ENCODE measurements at regions of chr11 and their contacts with region 1.

Region 1: DNA sequence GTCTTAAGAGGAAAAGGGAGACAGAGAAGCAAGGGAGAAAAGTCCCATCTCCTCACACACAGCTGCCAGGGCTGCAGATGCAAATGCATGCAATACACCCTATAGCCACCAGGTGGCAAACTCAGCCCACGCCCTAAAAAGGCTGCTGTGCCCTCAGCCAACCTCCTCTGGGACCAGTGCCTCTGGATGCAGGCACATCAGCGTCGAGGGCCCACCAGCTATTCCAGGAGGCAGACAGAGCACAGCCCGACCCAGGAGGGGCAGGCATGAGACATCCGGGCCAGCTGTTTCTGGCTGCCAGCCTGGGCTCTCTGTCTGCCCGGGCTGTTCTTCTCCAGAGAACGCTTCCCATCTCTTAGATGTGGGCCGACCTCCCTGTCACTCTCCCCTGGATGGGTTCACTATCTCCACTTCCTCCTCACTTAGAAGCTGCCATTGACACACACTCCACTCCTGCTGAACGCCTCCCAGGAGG is 39.7 kb downstream of the TPBGL start:
- DNase-seq: peak; percentile 79 to 93
- ATAC-seq: peak; percentile 85 to 97
- H3K4me3 ChIP-seq: no peak overlapping the region
- H3K27ac ChIP-seq: peak overlapping the region in 1 of 2 experiments; percentile 28; a peak in 1 of 6 replicates
- H3K4me1 ChIP-seq: peaks cover 10% of the 10 kb centered on the region
- CTCF ChIP-seq: peak; percentile 90
- EP300 ChIP-seq: no peak
- POLR2A ChIP-seq: no peak
- RAD21 ChIP-seq: peak; percentile 96 to 99

Region 2: GRCh38 chr11:75132080-75132479 is 148.2 kb before region 1 on chr11:
- CTCF ChIA-PET with region 1: no interaction called
- POLR2A ChIA-PET with region 1: no interaction called
- DNase-seq: no peak
- ATAC-seq: no peak
- H3K4me3 ChIP-seq: no peak overlapping the region
- H3K27ac ChIP-seq: no peak overlapping the region
- H3K4me1 ChIP-seq: no peaks in the 10 kb centered on the region
- CTCF ChIP-seq: no peak
- EP300 ChIP-seq: no peak
- POLR2A ChIP-seq: no peak
- RAD21 ChIP-seq: no peak

Region 3: DNA sequence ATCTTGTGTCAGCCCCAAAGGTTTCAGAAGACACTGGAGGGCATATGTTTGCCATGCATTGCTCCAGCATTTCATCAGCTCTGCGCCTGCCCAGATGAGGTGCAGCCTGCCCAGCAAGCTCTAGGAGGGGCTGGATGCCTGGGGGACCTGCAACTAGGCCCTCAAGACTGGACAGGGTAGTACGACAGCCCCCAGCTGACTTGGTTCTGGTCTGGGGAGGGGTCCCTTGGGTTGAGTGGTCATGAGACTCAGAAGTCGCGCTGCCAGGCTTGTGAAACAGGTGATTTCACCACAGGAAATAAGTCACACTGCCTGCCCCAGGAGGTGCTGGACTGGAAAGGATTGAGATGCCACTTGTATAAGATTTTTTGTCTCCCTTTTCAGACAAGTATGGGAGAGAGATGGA is 16.3 kb before region 1 on chr11:
- CTCF ChIA-PET with region 1: interaction called, 69 read pairs
- POLR2A ChIA-PET with region 1: no interaction called
- DNase-seq: no peak
- ATAC-seq: no peak; a peak in 1 of 6 replicates
- H3K4me3 ChIP-seq: no peak overlapping the region
- H3K27ac ChIP-seq: peak overlapping the region; percentile 19 to 43; a peak in 1 of 6 replicates
- H3K4me1 ChIP-seq: peaks cover 9% of the 10 kb centered on the region; the same call in 1 of the 3 replicates
- CTCF ChIP-seq: no peak
- EP300 ChIP-seq: no peak
- POLR2A ChIP-seq: no peak
- RAD21 ChIP-seq: no peak

Region 4: DNA sequence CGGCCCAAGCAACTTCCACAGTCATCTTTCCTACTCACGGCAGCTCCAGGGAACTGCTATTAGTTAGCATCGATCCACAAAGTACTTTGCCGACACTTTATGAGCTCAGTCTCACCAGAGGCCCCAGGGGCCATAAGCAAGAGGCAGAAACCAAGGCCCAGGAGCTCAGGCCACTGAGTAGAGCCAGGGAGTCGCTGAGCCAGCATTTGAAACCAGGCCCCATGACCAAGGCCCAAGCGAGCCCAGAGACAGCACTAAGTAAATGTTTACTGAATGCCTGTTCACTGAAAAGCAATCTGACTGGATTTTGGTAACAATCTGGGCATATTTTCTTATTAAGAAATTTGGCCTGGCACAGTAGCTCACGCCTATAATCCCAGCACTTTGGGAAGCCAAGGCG is 27.9 kb after region 1 on chr11:
- CTCF ChIA-PET with region 1: interaction called, 20 read pairs
- POLR2A ChIA-PET with region 1: no interaction called
- DNase-seq: no peak
- ATAC-seq: no peak
- H3K4me3 ChIP-seq: no peak overlapping the region
- H3K27ac ChIP-seq: no peak overlapping the region
- H3K4me1 ChIP-seq: no peaks in the 10 kb centered on the region
- CTCF ChIP-seq: no peak
- EP300 ChIP-seq: no peak
- POLR2A ChIP-seq: no peak
- RAD21 ChIP-seq: no peak

Region 5: GRCh38 chr11:75328426-75329277 is 48.4 kb after region 1 on chr11:
- CTCF ChIA-PET with region 1: interaction called, 79 read pairs
- POLR2A ChIA-PET with region 1: no interaction called
- DNase-seq: peak; percentile 85 to 86
- ATAC-seq: peak; percentile 94 to 95
- H3K4me3 ChIP-seq: no peak overlapping the region
- H3K27ac ChIP-seq: peak overlapping the region; percentile 17 to 57; a peak in 5 of 6 replicates
- H3K4me1 ChIP-seq: peaks cover 62% of the 10 kb centered on the region
- CTCF ChIP-seq: peak; percentile 85
- EP300 ChIP-seq: no peak
- POLR2A ChIP-seq: no peak
- RAD21 ChIP-seq: peak; percentile 96 to 98

Region 6: GRCh38 chr11:75342903-75343870 is 62.9 kb after region 1 on chr11:
- CTCF ChIA-PET with region 1: interaction called, 21 read pairs
- POLR2A ChIA-PET with region 1: interaction called, 4 read pairs
- DNase-seq: peak; percentile 76 to 94
- ATAC-seq: peak; percentile 44 to 56; a peak in 5 of 6 replicates
- H3K4me3 ChIP-seq: no peak overlapping the region
- H3K27ac ChIP-seq: peak overlapping the region; percentile 76 to 80
- H3K4me1 ChIP-seq: peaks cover 81% of the 10 kb centered on the region
- CTCF ChIP-seq: no peak
- EP300 ChIP-seq: no peak
- POLR2A ChIP-seq: no peak
- RAD21 ChIP-seq: no peak

Region 7: GRCh38 chr11:75454987-75455386 is 174.7 kb after region 1 on chr11:
- CTCF ChIA-PET with region 1: no interaction called
- POLR2A ChIA-PET with region 1: no interaction called
- DNase-seq: no peak
- ATAC-seq: no peak
- H3K4me3 ChIP-seq: no peak overlapping the region
- H3K27ac ChIP-seq: no peak overlapping the region
- H3K4me1 ChIP-seq: peaks cover 14% of the 10 kb centered on the region; the same call in 1 of the 3 replicates
- CTCF ChIP-seq: no peak
- EP300 ChIP-seq: no peak
- POLR2A ChIP-seq: no peak
- RAD21 ChIP-seq: no peak

Measured in A549 (cell line).